ENCODE measurements at regions of chr11 and their contacts with region 1.

Region 1: GRCh38 chr11:58394195-58394594 is 12.5 kb downstream of the OR5B3 start:
- DNase-seq: peak; percentile 5
- H3K4me3 Mint-ChIP-seq: no peak overlapping the region
- H3K27ac Mint-ChIP-seq: no peak overlapping the region
- H3K4me1 Mint-ChIP-seq: peaks cover 10% of the 10 kb centered on the region
- H3K27me3 Mint-ChIP-seq: no peaks in the 10 kb centered on the region
- CTCF ChIP-seq: no peak

Region 2: DNA sequence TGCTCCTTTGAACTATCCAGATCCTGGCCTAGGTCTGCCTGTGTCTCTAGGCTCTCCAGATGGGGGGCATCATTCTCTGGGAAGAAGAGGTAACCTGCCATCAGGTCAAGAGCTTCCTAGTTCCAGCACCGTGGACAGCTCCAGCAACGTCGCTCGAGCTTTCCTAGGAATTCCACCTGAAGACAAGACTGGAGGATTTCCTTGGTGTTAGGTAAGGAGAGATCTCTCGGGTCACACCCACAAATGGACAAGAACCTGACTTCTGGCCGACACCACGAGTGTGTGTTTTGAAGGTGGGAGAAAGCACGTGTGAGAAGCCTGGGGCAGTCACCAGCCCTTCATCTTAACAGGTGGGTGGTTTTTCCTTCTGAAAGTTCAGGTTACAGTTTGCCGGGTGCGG is 1014.5 kb before region 1 on chr11:
- CTCF ChIA-PET with region 1: no interaction called
- intact Hi-C with region 1: loop called (anchors 10 kb)
- DNase-seq: peak; percentile 19
- H3K4me3 Mint-ChIP-seq: no peak overlapping the region
- H3K27ac Mint-ChIP-seq: no peak overlapping the region
- H3K4me1 Mint-ChIP-seq: no peaks in the 10 kb centered on the region
- H3K27me3 Mint-ChIP-seq: peaks cover 65% of the 10 kb centered on the region
- CTCF ChIP-seq: no peak